ENCODE measurements at regions of chr7 and their contacts with region 1.

Region 1: GRCh38 chr7:102404005-102404861 is 8.1 kb downstream of the PRKRIP1 start:
- DNase-seq: no peak
- ATAC-seq: peak; percentile 94
- H3K4me3 Mint-ChIP-seq: no peak overlapping the region
- H3K27ac Mint-ChIP-seq: no peak overlapping the region
- H3K4me1 Mint-ChIP-seq: peaks cover 37% of the 10 kb centered on the region
- H3K27me3 Mint-ChIP-seq: no peaks in the 10 kb centered on the region
- CTCF ChIP-seq: no peak

Region 2: GRCh38 chr7:101702362-101702850 is 701.8 kb before region 1 on chr7:
- CTCF ChIA-PET with region 1: no interaction called
- POLR2A ChIA-PET with region 1: no interaction called
- intact Hi-C with region 1: no loop called
- DNase-seq: no peak
- ATAC-seq: no peak
- H3K4me3 Mint-ChIP-seq: no peak overlapping the region
- H3K27ac Mint-ChIP-seq: no peak overlapping the region
- H3K4me1 Mint-ChIP-seq: no peaks in the 10 kb centered on the region
- H3K27me3 Mint-ChIP-seq: peaks cover 3% of the 10 kb centered on the region
- CTCF ChIP-seq: no peak

Region 3: GRCh38 chr7:102433219-102434038 is 29.2 kb after region 1 on chr7 and contains the start of gene ORAI2:
- CTCF ChIA-PET with region 1: interaction called, 9 read pairs
- POLR2A ChIA-PET with region 1: interaction called, 886 read pairs
- intact Hi-C with region 1: no loop called
- DNase-seq: peak; percentile 89
- ATAC-seq: peak; percentile 57
- H3K4me3 Mint-ChIP-seq: peak within 1 kb of the TSS; percentile 89
- H3K27ac Mint-ChIP-seq: peak within 1 kb of the TSS; percentile 100
- H3K4me1 Mint-ChIP-seq: peaks cover 80% of the 10 kb centered on the region
- H3K27me3 Mint-ChIP-seq: no peaks in the 10 kb centered on the region
- CTCF ChIP-seq: no peak
- total RNA-seq, gene ORAI2: 167 and 184 TPM in 2 replicates

Region 4: DNA sequence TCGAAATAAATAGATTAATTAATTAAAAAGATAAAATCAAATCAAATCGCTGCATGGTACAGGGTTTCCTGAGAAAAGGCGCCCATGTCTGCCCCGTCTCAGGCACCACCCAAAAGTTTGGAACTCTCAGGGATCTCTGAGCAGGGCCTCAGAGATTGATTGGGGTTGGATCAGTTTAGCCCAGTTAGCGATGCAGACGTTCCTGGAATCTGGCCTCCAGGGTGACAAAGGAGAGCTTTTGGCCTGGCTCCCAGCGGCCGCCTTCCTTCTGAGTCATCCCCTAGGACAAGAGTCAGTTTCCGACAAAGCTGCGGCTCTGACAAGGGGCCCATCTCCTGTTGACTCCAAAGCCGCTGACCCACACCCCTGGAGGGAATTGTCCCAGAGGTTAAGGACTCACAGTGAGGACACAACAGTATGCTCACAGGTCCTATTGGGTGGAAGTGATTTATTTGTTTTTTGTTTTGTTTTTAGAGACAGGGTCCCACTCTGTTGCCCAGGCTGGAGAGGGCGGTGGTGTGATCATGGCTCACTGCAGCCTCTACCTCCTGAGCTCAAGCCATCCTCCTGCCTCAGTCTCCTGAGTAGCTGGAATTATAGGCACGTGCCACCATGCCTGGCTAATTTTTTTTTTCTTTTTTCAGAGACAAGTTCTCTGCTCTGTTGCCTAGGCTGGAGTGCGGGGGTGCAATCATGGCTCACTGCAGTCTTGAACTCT is 36.0 kb after region 1 on chr7:
- CTCF ChIA-PET with region 1: interaction called, 219 read pairs
- POLR2A ChIA-PET with region 1: interaction called, 886 read pairs
- intact Hi-C with region 1: no loop called
- DNase-seq: no peak
- ATAC-seq: no peak
- H3K4me3 Mint-ChIP-seq: no peak overlapping the region
- H3K27ac Mint-ChIP-seq: peak overlapping the region; percentile 93
- H3K4me1 Mint-ChIP-seq: peaks cover 67% of the 10 kb centered on the region
- H3K27me3 Mint-ChIP-seq: no peaks in the 10 kb centered on the region
- CTCF ChIP-seq: no peak

Region 5: GRCh38 chr7:102450242-102450641 is 46.0 kb after region 1 on chr7:
- CTCF ChIA-PET with region 1: interaction called, 219 read pairs
- POLR2A ChIA-PET with region 1: interaction called, 886 read pairs
- intact Hi-C with region 1: loop called (anchors 1 kb)
- DNase-seq: peak; percentile 46
- ATAC-seq: peak; percentile 88
- H3K4me3 Mint-ChIP-seq: no peak overlapping the region
- H3K27ac Mint-ChIP-seq: peak overlapping the region; percentile 63
- H3K4me1 Mint-ChIP-seq: peaks cover 29% of the 10 kb centered on the region
- H3K27me3 Mint-ChIP-seq: no peaks in the 10 kb centered on the region
- CTCF ChIP-seq: no peak

Region 6: GRCh38 chr7:104156842-104157277 is 1752.6 kb after region 1 on chr7:
- CTCF ChIA-PET with region 1: no interaction called
- POLR2A ChIA-PET with region 1: no interaction called
- intact Hi-C with region 1: no loop called
- DNase-seq: no peak
- ATAC-seq: no peak
- H3K4me3 Mint-ChIP-seq: no peak overlapping the region
- H3K27ac Mint-ChIP-seq: no peak overlapping the region
- H3K4me1 Mint-ChIP-seq: no peaks in the 10 kb centered on the region
- H3K27me3 Mint-ChIP-seq: no peaks in the 10 kb centered on the region
- CTCF ChIP-seq: no peak